Posterior vena cava (tissue), 2 donors: ENCODE measurements at regions of chr5 and their contacts with region 1.

Region 1: DNA sequence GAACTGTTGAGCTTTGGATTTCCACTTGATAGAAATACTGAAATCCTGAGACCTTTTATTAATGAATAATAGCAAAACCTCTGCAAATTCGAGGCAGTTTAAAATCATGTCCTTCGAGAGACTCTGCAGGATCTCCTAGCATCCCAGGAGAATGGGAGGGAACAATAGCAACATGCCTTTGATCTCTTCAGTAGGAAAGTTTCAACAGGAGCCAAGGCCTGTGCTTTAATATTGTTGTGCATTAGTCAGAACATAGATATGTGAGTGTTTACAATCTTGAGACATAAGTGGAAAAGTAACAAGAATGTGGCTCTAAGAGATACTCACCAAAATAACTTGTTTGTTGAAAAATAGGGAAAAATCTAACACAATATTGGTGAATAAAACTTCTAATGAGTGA is 83.3 kb upstream of the LHFPL2 start:
- DNase-seq: no peak

Region 2: GRCh38 chr5:77669677-77670076 is 1062.2 kb before region 1 on chr5:
- intact Hi-C with region 1: no loop called
- DNase-seq: no peak

Region 3: DNA sequence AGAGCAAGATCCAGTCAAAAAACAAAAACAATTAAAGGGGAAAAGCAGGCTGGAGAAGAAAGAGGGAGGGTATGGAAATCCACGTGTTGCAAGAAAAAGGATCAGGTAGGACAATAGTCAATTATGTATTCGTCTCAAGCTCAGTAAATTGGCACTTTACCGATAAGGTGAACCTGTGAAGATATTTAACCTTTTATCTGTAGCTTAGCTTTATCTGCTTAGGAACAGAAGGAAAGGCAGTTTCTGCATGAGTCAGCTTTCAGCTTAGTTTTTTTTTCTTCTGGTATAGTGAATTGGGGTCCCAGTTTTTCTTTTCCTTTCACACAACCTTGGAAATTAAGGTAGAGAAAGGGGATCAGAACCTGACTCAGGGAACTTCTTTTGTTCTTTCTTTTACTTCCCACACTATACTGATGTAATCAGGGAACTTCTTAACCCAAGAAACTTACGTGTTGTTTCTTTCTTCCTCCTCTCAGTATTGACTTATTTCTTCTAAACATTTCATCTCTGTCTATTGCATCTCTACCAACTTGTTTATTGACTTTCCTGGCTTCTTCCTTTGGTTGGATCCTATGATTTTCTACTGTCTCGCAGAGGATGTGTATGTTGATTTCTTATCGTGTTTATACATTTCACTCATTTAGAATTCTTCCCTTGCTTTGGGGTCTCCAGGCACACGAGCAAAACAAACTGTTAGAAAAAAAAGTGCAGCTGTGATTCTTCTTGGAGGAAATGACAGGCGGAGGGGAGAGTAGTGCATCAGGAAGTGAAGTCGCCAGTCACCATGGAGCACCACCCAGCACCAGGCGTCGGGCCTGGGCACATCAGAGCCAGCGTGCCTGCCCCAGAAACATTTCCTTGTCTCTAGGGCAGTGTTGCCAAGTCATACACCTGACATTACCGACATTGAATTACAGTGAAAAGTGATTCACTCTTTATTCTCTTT is 39.6 kb after region 1 on chr5:
- intact Hi-C with region 1: loop called in 1 of 2 experiments (anchors 2 kb)
- DNase-seq: no peak